ENCODE measurements at regions of chr10 and their contacts with region 1.

Region 1: DNA sequence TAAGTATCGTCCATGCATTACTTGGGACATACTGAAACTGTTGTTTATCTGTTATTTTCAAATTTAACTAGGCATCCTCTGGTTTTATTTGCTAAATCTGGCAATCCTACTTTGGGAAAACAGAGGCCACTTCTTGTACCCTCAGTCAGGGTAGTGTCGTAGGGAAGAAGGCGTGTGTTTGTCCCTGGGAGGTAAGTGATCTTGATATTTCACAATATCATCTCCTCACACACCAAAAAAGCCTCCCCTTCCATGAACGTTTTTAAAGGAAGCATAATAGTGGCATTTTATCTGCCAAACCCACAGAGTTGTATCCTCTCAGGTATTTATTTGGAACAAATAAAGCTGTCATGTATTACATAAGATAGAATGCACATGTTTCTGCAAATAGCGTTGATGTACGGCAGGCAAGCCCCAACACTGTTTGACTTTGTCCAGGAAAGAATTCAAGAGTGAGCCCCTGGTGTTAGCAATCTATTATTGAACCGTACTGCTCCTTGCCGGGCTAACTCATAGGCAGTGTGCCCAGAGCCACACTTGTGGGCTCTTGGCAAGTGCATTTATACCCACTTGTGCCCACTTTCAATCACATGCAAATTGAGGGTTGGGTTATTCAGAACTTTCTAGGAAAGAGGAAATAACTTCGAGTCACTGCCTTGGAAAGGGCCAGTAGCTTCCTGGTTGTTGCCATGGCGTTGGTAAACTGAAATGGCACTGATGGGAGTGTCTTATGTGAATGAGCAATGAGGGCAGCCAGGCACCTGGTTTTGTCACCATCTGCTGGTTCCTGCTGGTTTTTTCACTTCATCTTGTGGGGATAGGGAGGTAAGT is 266.0 kb downstream of the USP6NL start:
- DNase-seq: peak in 1 of 9 experiments; percentile 27
- ATAC-seq: no peak
- H3K4me3 ChIP-seq: no peak overlapping the region
- H3K4me3 Mint-ChIP-seq: no peak overlapping the region
- H3K27ac ChIP-seq: no peak overlapping the region
- H3K27ac Mint-ChIP-seq: no peak overlapping the region
- H3K4me1 ChIP-seq: no peaks in the 10 kb centered on the region
- H3K4me1 Mint-ChIP-seq: peaks cover 3% of the 10 kb centered on the region
- H3K27me3 ChIP-seq: no peaks in the 10 kb centered on the region
- H3K27me3 Mint-ChIP-seq: no peaks in the 10 kb centered on the region
- CTCF ChIP-seq: no peak

Region 2: GRCh38 chr10:11386044-11386443 is 40.6 kb after region 1 on chr10:
- CTCF ChIA-PET with region 1: no interaction called
- POLR2A ChIA-PET with region 1: no interaction called
- intact Hi-C with region 1: loop called in 1 of 2 experiments (anchors 1 kb)
- DNase-seq: no peak
- ATAC-seq: no peak
- H3K4me3 ChIP-seq: no peak overlapping the region
- H3K4me3 Mint-ChIP-seq: no peak overlapping the region
- H3K27ac ChIP-seq: no peak overlapping the region
- H3K27ac Mint-ChIP-seq: no peak overlapping the region
- H3K4me1 ChIP-seq: no peaks in the 10 kb centered on the region
- H3K4me1 Mint-ChIP-seq: no peaks in the 10 kb centered on the region
- H3K27me3 ChIP-seq: no peaks in the 10 kb centered on the region
- H3K27me3 Mint-ChIP-seq: no peaks in the 10 kb centered on the region
- CTCF ChIP-seq: no peak

Measured in CD8-positive, alpha-beta T cell (primary cell).